ENCODE measurements at regions of chr7 and their contacts with region 1.

Region 1: DNA sequence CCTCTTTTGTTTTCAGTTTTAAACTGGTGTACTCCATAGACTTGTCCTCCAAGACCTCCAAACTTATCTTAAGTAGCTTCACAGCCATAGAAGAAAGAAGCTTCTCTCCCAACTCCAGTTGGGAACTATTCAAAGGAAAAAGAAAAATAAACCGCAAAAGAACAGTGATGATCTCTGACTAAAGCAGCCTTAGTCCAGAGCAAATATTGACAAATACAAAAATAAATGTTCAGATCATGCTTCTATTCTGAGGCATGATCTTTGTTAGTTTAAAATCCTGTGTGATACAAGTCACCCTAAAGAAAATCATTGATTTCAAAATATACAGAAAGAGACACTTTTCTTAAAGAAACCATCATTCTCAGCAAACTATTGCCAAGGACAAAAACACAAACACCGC is 373.0 kb upstream of the SMIM30 start:
- DNase-seq: no peak
- ATAC-seq: no peak
- H3K4me3 ChIP-seq: no peak overlapping the region
- H3K4me3 Mint-ChIP-seq: no peak overlapping the region
- H3K27ac ChIP-seq: no peak overlapping the region
- H3K27ac Mint-ChIP-seq: no peak overlapping the region
- H3K4me1 ChIP-seq: no peaks in the 10 kb centered on the region
- H3K4me1 Mint-ChIP-seq: no peaks in the 10 kb centered on the region
- H3K27me3 ChIP-seq: no peaks in the 10 kb centered on the region
- H3K27me3 Mint-ChIP-seq: no peaks in the 10 kb centered on the region
- CTCF ChIP-seq: no peak

Region 2: GRCh38 chr7:113404245-113404644 is 87.1 kb before region 1 on chr7:
- CTCF ChIA-PET with region 1: no interaction called
- POLR2A ChIA-PET with region 1: no interaction called
- intact Hi-C with region 1: no loop called
- DNase-seq: no peak
- ATAC-seq: no peak
- H3K4me3 ChIP-seq: no peak overlapping the region
- H3K4me3 Mint-ChIP-seq: no peak overlapping the region
- H3K27ac ChIP-seq: no peak overlapping the region
- H3K27ac Mint-ChIP-seq: no peak overlapping the region
- H3K4me1 ChIP-seq: no peaks in the 10 kb centered on the region
- H3K4me1 Mint-ChIP-seq: no peaks in the 10 kb centered on the region
- H3K27me3 ChIP-seq: peaks cover 0 to 6% of the 10 kb centered on the region in 2 experiments
- H3K27me3 Mint-ChIP-seq: peaks cover 11% of the 10 kb centered on the region
- CTCF ChIP-seq: no peak

Region 3: DNA sequence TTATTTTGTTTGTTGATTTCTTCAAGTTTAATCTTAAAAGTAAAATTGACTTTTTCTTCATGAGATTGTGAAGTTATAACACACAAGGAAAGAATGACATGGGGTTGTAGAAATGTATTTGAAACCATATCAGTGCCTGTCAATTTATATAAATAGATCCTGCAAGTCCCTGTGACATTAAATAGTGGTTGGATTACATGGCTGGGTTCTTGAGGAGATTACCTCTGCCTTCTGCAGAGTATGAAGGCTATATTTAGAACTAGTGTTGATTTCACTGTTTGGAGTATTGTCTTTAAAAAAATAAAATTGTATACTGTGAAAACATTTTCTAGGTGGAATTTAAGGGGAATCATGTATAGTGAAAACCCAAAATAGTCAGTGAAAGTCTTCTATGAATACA is 12.8 kb after region 1 on chr7:
- CTCF ChIA-PET with region 1: no interaction called
- POLR2A ChIA-PET with region 1: no interaction called
- intact Hi-C with region 1: loop called in 1 of 2 experiments (anchors 2 kb)
- DNase-seq: no peak
- ATAC-seq: no peak
- H3K4me3 ChIP-seq: no peak overlapping the region
- H3K4me3 Mint-ChIP-seq: no peak overlapping the region
- H3K27ac ChIP-seq: no peak overlapping the region
- H3K27ac Mint-ChIP-seq: no peak overlapping the region
- H3K4me1 ChIP-seq: no peaks in the 10 kb centered on the region
- H3K4me1 Mint-ChIP-seq: no peaks in the 10 kb centered on the region
- H3K27me3 ChIP-seq: no peaks in the 10 kb centered on the region
- H3K27me3 Mint-ChIP-seq: no peaks in the 10 kb centered on the region
- CTCF ChIP-seq: no peak